Caco-2 (cell line): ENCODE measurements at regions of chr12 and their contacts with region 1.

Region 1: GRCh38 chr12:77152623-77153193 is 87.3 kb upstream of the E2F7 start:
- DNase-seq: peak in 1 of 2 experiments; percentile 20
- H3K4me3 ChIP-seq: no peak overlapping the region
- H3K4me3 Mint-ChIP-seq: no peak overlapping the region
- H3K27ac Mint-ChIP-seq: no peak overlapping the region
- H3K4me1 ChIP-seq: no peaks in the 10 kb centered on the region
- H3K4me1 Mint-ChIP-seq: no peaks in the 10 kb centered on the region
- H3K27me3 ChIP-seq: no peaks in the 10 kb centered on the region
- H3K27me3 Mint-ChIP-seq: no peaks in the 10 kb centered on the region
- CTCF ChIP-seq: peak; percentile 53 to 57

Region 2: GRCh38 chr12:77324763-77325468 is 172.2 kb after region 1 on chr12:
- CTCF ChIA-PET with region 1: interaction called, 6 read pairs
- POLR2A ChIA-PET with region 1: no interaction called
- intact Hi-C with region 1: loop called (anchors 2 kb)
- DNase-seq: peak; percentile 56 to 78
- H3K4me3 ChIP-seq: peak overlapping the region; percentile 38
- H3K4me3 Mint-ChIP-seq: peak overlapping the region; percentile 85
- H3K27ac Mint-ChIP-seq: no peak overlapping the region
- H3K4me1 ChIP-seq: no peaks in the 10 kb centered on the region
- H3K4me1 Mint-ChIP-seq: peaks cover 5% of the 10 kb centered on the region
- H3K27me3 ChIP-seq: no peaks in the 10 kb centered on the region; the same call in 1 of the 2 replicates
- H3K27me3 Mint-ChIP-seq: peaks cover 32% of the 10 kb centered on the region
- CTCF ChIP-seq: peak; percentile 19 to 70

Region 3: DNA sequence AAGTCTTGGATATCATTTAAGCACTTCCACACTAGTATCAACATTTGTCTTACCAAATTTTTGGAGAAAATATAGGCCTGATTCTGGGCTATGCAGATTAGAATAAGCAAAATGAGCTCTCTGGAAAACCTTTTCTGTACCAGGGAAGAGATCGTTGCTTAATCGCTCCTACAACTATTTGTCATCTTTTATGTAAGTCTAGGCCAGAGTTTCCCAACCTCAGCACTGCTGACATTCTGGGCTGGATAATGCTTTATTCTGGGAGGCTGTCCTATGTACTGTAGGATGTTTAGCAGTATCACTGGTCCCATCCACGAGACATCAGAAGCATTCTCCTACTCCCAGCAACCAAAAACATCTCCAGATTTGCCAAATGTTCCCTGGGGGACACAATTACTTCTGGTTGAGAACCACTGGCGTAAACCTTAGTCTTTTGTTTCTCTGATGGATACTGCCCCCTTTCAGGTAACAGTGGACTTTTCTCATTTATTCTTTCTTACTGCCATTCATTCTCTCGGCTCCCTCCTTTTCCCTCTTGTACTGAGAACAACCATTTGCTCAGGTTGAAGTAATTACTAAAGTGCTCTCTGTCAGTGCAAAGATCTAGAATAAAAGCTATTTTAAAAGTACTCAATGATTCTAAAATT is 229.5 kb after region 1 on chr12:
- CTCF ChIA-PET with region 1: no interaction called
- POLR2A ChIA-PET with region 1: no interaction called
- intact Hi-C with region 1: loop called (anchors 1 kb)
- DNase-seq: no peak
- H3K4me3 ChIP-seq: no peak overlapping the region
- H3K4me3 Mint-ChIP-seq: no peak overlapping the region
- H3K27ac Mint-ChIP-seq: no peak overlapping the region
- H3K4me1 ChIP-seq: no peaks in the 10 kb centered on the region
- H3K4me1 Mint-ChIP-seq: no peaks in the 10 kb centered on the region
- H3K27me3 ChIP-seq: no peaks in the 10 kb centered on the region
- H3K27me3 Mint-ChIP-seq: peaks cover 5% of the 10 kb centered on the region
- CTCF ChIP-seq: no peak

Region 4: DNA sequence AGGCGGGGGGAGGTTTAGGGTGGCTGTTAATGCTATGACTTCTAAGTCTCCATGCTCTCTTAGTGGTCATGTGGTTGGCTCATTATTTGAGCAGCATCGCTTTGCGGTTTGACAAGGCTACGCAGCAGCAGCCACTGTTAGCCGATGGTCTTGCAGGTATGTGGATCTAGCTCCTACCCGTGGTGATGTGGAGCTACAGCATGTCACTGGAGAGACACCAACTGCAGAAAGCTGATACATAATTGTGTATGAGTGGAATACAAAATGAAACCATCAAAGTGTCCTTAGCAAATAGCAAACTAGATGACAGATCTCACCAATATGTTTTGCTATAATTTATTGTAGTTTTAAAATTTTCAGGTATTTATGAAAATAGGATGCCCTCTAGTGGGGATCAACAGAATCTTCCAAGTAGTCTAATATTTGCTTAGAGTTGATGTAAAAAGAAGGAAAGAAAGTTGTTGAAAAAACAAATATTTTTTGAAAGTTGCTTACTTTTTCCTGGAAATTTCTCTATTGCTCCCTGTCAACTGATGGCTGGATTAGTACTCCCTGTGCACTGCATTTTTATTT is 772.9 kb after region 1 on chr12:
- CTCF ChIA-PET with region 1: no interaction called
- POLR2A ChIA-PET with region 1: no interaction called
- intact Hi-C with region 1: loop called (anchors 1 kb)
- DNase-seq: peak; percentile 74 to 84
- H3K4me3 ChIP-seq: no peak overlapping the region
- H3K4me3 Mint-ChIP-seq: no peak overlapping the region
- H3K27ac Mint-ChIP-seq: no peak overlapping the region
- H3K4me1 ChIP-seq: no peaks in the 10 kb centered on the region
- H3K4me1 Mint-ChIP-seq: no peaks in the 10 kb centered on the region
- H3K27me3 ChIP-seq: no peaks in the 10 kb centered on the region
- H3K27me3 Mint-ChIP-seq: no peaks in the 10 kb centered on the region
- CTCF ChIP-seq: peak; percentile 94